ENCODE measurements at regions of chr6 and their contacts with region 1.

Region 1: DNA sequence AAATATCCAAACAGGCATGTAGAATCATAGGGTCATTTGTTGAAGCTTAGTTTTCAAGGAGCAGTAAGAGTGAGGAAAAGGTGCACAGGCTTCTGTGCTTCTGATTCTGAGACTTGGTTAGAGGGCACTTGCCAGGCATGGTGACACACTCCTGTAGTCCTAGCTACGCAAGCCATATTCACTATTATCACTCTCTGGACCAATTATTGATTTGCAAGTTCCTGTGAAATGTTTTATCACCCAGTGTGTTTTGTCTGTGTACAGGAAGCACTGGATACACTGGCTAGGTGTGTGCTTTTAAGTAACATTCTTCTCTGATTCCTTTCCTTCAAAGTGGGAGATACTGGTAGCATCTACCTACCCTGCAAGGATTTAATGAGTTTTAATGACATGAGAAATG is 76.3 kb downstream of the JARID2 start:
- DNase-seq: no peak
- H3K4me3 ChIP-seq: no peak overlapping the region
- H3K27me3 ChIP-seq: no peaks in the 10 kb centered on the region
- CTCF ChIP-seq: no peak

Region 2: DNA sequence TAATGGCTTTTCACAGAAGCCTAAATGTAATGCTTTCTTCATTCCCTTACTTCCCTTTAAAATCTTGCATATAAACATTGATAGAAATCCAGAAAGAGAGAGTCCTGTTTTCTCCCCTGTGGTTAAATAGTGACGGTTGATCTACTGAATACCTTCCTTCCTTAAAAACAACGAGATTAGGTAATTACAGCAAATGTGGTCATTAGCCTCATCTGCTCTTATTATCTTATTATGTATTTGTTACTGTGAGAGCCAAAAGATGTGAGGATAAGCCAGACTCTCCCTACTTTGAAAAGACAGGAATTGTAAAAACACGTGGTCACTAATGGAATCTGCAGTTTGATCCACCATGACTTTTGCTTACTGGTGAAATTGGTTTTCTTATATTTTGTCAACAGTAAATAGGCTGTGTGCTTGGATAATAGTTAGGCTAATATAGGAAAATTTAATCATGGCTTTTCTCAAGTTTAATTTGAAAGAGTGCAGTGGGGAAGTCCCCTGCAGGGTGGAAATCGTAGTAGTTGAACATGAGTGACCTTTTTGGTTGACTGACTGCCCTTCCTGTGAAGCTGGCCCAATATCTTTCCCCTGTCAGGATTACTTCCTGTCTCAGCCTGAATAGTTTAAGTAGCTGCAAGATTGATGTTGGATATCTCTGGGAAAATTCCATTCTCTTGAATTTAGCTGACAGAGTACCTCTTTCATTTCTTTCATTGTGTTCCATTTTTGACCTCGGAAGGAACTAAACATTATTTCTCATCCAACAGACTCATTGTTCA is 13.6 kb before region 1 on chr6:
- CTCF ChIA-PET with region 1: no interaction called
- POLR2A ChIA-PET with region 1: no interaction called
- DNase-seq: no peak
- H3K4me3 ChIP-seq: no peak overlapping the region
- H3K27me3 ChIP-seq: no peaks in the 10 kb centered on the region
- CTCF ChIP-seq: no peak

Region 3: GRCh38 chr6:15351631-15352030 is 29.4 kb after region 1 on chr6:
- CTCF ChIA-PET with region 1: no interaction called
- POLR2A ChIA-PET with region 1: interaction called, 16 read pairs
- DNase-seq: peak; percentile 62
- H3K4me3 ChIP-seq: no peak overlapping the region
- H3K27me3 ChIP-seq: no peaks in the 10 kb centered on the region
- CTCF ChIP-seq: no peak